ENCODE measurements at regions of chr19 and their contacts with region 1.

Region 1: DNA sequence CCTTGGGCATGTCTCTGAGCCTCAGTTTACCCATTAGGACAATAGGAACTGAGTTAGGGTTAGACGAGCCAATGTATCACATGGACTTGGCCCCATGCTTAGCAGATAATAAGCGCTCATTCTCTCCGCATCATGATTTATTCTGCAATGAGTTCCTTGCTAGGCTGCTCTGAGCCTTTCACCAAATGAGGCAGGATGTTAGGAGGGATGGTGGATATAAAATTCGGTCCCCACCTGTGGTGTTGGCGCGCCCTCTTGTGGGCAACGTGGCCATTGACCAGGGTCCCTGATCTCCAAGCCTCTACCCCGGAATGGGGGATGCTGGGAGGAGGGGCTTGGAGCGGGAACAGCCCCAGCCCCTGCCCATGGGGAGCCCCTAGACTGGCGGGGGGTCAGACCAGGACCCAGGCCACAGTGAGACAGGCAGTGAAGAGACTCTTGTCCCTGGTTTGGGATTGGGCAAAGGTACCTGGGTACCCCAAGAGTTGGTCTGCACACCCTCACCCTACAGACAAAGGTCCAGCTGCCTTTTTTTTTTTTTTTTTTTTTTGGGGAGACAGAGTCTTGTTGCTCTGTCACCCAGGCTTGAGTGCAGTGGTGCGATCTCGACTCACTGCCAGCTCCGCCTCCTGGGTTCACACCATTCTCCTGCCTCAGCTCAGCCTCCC is 43.9 kb downstream of the CERS4 start:
- DNase-seq: peak; percentile 86
- H3K4me3 Mint-ChIP-seq: no peak overlapping the region
- H3K27ac Mint-ChIP-seq: no peak overlapping the region
- H3K4me1 Mint-ChIP-seq: no peaks in the 10 kb centered on the region
- H3K27me3 Mint-ChIP-seq: no peaks in the 10 kb centered on the region
- CTCF ChIP-seq: peak; percentile 97

Region 2: GRCh38 chr19:7104747-7105447 is 1148.2 kb before region 1 on chr19:
- CTCF ChIA-PET with region 1: no interaction called
- POLR2A ChIA-PET with region 1: no interaction called
- intact Hi-C with region 1: loop called (anchors 10 kb)
- DNase-seq: no peak
- H3K4me3 Mint-ChIP-seq: no peak overlapping the region
- H3K27ac Mint-ChIP-seq: no peak overlapping the region
- H3K4me1 Mint-ChIP-seq: no peaks in the 10 kb centered on the region
- H3K27me3 Mint-ChIP-seq: no peaks in the 10 kb centered on the region
- CTCF ChIP-seq: no peak

Region 3: DNA sequence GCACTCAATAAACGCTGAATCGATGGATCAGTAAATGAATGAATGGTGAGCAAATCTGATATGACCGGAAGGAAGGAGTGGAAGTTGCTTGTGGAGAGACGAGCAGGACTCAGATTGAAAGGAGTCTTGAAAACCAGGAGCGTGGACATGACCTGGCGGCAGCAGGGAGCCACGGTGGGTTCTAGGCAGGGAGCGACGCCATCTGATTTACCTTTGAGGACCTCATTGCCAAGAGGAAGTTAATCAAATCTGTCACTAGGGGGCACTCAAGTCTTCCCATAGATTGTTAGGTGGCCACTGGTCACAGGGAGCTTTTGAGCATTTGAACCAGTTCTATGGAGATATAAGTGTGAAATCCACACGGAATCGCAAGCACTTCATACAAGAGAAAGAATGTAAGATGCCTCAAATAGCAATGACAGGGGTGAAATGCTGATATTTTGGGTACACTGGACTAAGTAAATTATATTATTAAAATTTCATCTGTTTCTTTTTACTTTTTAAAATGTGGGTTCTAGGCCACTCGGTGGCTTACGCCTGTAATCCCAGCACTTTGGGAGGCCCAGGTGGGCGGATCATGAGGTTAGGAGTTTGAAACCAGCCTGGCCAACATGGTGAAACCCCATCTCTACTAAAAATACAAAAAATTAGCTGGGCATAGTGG is 94.5 kb before region 1 on chr19:
- CTCF ChIA-PET with region 1: interaction called, 34 read pairs
- POLR2A ChIA-PET with region 1: interaction called, 4 read pairs
- intact Hi-C with region 1: loop called (anchors 1 kb)
- DNase-seq: peak; percentile 88
- H3K4me3 Mint-ChIP-seq: no peak overlapping the region
- H3K27ac Mint-ChIP-seq: no peak overlapping the region
- H3K4me1 Mint-ChIP-seq: peaks cover 13% of the 10 kb centered on the region
- H3K27me3 Mint-ChIP-seq: peaks cover 18% of the 10 kb centered on the region
- CTCF ChIP-seq: peak; percentile 55

Region 4: DNA sequence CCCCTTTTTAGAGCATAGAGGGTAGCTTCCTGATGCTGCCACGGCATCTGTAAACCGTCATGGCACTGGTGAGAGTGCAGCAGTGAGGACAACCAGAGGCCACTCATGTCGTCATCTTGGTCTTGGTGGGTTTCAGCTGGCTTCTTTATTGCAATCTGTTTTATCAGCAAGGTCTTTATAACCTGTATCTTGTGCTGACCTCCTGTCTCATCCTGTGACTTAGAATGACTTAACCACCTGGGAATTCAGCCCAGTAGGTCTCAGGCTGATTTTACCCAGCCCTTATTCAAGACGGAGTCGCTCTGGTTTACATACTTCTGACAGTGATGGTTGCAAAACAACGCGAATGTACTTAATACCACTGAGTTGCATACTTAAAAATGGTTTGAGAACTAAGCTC is 89.3 kb before region 1 on chr19:
- CTCF ChIA-PET with region 1: interaction called, 34 read pairs
- POLR2A ChIA-PET with region 1: interaction called, 3 read pairs
- intact Hi-C with region 1: loop called (anchors 1 kb)
- DNase-seq: no peak
- H3K4me3 Mint-ChIP-seq: no peak overlapping the region
- H3K27ac Mint-ChIP-seq: no peak overlapping the region
- H3K4me1 Mint-ChIP-seq: peaks cover under 1% of the 10 kb centered on the region
- H3K27me3 Mint-ChIP-seq: no peaks in the 10 kb centered on the region
- CTCF ChIP-seq: no peak

Region 5: GRCh38 chr19:8487137-8487851 is 234.2 kb after region 1 on chr19:
- CTCF ChIA-PET with region 1: no interaction called
- POLR2A ChIA-PET with region 1: no interaction called
- intact Hi-C with region 1: no loop called
- DNase-seq: no peak
- H3K4me3 Mint-ChIP-seq: no peak overlapping the region
- H3K27ac Mint-ChIP-seq: no peak overlapping the region
- H3K4me1 Mint-ChIP-seq: peaks cover 9% of the 10 kb centered on the region
- H3K27me3 Mint-ChIP-seq: no peaks in the 10 kb centered on the region
- CTCF ChIP-seq: no peak